Mammary epithelial cell (primary cell): ENCODE measurements at regions of chr19 and their contacts with region 1.

Region 1: GRCh38 chr19:17245244-17245984 is at the start of gene NR2F6:
- DNase-seq: peak; percentile 40
- H3K4me3 ChIP-seq: peak within 1 kb of the TSS; percentile 89 to 95 (median 91)
- H3K27ac ChIP-seq: peak within 1 kb of the TSS; percentile 12
- H3K4me1 ChIP-seq: peaks cover 30% of the 10 kb centered on the region
- H3K27me3 ChIP-seq: no peaks in the 10 kb centered on the region
- CTCF ChIP-seq: no peak
- total RNA-seq, gene NR2F6: 41.1 to 48.8 TPM

Region 2: DNA sequence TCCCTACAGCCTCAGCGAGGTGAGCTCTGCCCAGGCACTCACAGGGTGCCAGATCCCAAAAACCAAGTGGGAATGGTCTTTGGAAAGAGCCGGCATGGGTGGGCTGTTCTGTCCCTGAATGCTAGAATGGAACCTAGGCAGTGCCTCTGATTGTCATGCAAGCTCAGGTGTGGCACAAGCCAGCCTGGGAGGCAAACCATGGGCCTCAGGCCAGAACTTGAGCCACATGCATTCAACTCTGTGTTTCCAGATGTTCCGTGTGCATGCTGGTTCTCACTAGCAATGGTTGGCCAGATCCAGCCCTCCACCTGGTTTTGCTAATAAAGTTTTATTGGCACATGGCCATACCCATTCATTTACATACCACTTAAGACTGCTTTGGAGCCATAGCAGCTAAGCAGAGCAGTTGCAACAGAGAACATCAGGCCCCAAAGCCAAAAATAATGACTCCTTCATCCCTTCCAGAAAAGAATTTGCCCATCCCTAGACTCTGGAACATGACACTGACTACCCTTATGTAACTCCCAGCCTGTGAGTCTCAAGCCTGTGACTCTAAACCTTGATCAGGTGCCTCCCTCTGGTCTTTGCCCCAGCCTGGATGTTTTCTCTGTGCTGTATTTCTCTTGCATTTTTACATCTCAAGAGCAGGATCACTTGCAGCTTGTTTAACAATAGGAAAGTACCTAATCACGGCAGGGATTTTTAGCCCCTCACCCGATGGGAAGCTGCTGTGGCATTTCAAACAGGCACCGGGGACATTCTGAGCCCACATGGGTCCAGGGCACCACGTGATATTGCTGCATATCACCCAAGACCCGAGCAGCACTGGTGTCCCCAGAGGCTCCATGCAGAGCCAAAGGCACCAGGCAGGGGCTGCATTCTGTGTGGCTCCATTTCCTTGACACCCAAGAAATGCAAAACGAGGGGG is 85.7 kb before region 1 on chr19:
- CTCF ChIA-PET with region 1: no interaction called
- dilution Hi-C with region 1: loop called (anchors 10 kb)
- in situ Hi-C with region 1: no loop called
- intact Hi-C with region 1: no loop called
- DNase-seq: peak; percentile 16
- H3K4me3 ChIP-seq: no peak overlapping the region
- H3K27ac ChIP-seq: no peak overlapping the region
- H3K4me1 ChIP-seq: no peaks in the 10 kb centered on the region
- H3K27me3 ChIP-seq: no peaks in the 10 kb centered on the region
- CTCF ChIP-seq: no peak

Region 3: GRCh38 chr19:17183858-17184321 is 61.5 kb before region 1 on chr19:
- CTCF ChIA-PET with region 1: no interaction called
- dilution Hi-C with region 1: loop called (anchors 5 kb)
- in situ Hi-C with region 1: no loop called
- intact Hi-C with region 1: no loop called
- DNase-seq: no peak
- H3K4me3 ChIP-seq: no peak overlapping the region
- H3K27ac ChIP-seq: no peak overlapping the region
- H3K4me1 ChIP-seq: no peaks in the 10 kb centered on the region
- H3K27me3 ChIP-seq: no peaks in the 10 kb centered on the region
- CTCF ChIP-seq: no peak

Region 4: DNA sequence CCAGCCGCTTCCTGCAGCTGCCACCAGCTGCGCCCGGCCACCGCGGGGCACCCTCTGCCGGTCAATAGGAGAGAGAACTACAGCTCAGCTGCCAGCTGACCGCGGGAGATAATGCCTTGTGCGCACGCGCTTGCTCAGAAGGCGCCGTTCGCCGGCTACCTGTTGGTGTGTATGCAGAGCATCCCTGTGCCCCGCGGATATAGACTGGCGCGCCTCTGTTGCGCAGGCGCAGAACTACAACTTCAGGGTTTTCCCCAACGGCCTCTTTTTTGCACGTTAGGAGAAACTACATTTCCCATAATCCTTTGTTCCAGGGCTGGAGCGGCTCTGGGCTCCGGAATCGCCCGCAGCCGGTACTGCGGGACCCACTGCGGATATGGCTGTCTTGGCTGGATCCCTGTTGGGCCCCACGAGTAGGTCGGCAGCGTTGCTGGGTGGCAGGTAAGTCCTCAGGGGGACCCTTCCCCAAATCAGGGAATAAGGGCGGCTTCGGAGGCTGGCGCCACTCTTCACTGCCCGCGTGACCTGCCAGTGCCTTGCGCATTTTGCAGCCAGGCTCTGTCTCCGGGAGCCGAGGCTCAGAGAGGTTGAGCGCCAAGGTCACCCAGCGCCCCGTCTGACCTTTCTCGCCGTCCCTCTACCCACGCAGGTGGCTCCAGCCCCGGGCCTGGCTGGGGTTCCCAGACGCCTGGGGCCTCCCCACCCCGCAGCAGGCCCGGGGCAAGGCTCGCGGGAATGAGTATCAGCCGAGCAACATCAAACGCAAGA is 60.3 kb after region 1 on chr19 and contains the start of gene MRPL34:
- CTCF ChIA-PET with region 1: no interaction called
- dilution Hi-C with region 1: loop called (anchors 10 kb)
- in situ Hi-C with region 1: no loop called
- intact Hi-C with region 1: no loop called
- DNase-seq: peak; percentile 100
- H3K4me3 ChIP-seq: peak within 1 kb of the TSS; percentile 57 to 90 (median 80)
- H3K27ac ChIP-seq: peak within 1 kb of the TSS; percentile 56
- H3K4me1 ChIP-seq: peaks cover 43% of the 10 kb centered on the region
- H3K27me3 ChIP-seq: no peaks in the 10 kb centered on the region
- CTCF ChIP-seq: peak; percentile 61 to 91
- total RNA-seq, gene MRPL34: 36.7 to 76.3 TPM

Region 5: DNA sequence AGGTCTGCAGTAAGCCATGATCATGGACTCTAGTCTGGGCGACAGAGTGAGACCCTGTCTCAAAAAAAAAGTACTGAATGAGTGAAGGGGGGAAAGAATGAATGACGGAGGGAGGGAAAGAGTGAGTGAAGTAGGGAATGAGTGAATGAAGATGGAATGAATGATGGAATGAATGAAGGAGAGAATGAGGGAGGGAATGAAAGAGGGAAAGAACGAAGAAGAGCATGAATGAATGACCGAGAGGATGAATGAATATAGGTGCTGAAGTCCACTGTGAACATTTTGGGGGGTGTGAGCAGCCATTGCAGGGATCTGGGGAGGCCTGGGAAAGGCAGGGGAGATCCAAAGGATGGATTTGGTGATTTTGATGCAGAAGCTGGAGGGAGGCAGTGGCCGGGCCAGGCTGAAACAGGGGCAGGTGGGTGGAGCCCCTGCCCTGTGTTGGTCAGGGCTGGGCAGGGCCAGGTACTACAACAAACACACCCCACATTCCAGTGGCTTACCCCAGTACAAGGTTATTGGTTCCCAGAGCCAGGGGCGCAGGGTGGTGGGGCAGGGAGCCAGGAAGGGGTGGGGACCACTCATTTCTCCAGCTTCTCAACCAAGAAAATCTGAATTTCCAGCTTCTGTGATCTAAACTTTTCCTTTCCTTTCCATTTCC is 239.2 kb after region 1 on chr19:
- CTCF ChIA-PET with region 1: interaction called, 19 read pairs
- dilution Hi-C with region 1: no loop called
- in situ Hi-C with region 1: no loop called
- intact Hi-C with region 1: no loop called
- DNase-seq: no peak
- H3K4me3 ChIP-seq: no peak overlapping the region
- H3K27ac ChIP-seq: no peak overlapping the region
- H3K4me1 ChIP-seq: peaks cover 17% of the 10 kb centered on the region
- H3K27me3 ChIP-seq: no peaks in the 10 kb centered on the region
- CTCF ChIP-seq: no peak